A673 (cell line): ENCODE measurements at regions of chr6 and their contacts with region 1.

Region 1: DNA sequence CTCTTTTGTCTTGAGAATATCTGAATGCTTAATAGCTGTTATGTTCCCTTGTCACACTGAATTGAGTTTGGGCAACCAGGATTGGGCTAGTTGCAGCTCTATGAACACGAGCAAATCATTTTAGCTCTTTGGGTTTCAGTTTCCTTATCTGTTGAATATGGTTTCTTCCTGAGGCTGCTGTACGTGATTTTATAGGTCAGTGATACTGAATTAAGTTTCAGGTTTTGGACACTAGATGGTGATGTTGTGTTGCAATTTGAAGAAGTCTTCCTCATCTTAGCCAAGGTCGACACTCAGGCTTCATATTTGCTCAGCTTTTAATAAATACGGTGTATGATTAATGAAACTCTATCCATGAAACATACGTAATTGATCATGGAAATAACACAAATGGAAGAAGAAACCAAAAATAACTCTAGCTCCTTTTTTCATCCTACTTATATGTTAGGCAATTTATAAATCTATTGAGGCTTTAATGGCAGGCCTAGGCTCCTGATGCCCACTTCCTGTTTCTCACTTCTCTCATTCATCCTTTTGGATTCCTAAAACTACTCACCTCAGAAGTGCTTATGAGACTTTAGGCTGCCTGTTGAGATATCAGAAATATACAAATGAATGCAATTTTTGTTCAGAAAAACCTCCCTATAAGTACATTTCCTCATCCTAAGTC is 354.1 kb upstream of the MAP3K7 start:
- DNase-seq: peak; percentile 84
- H3K4me3 ChIP-seq: no peak overlapping the region
- H3K27ac ChIP-seq: no peak overlapping the region
- H3K4me1 ChIP-seq: peaks cover 6% of the 10 kb centered on the region
- H3K27me3 ChIP-seq: no peaks in the 10 kb centered on the region
- CTCF ChIP-seq: peak; percentile 72

Region 2: DNA sequence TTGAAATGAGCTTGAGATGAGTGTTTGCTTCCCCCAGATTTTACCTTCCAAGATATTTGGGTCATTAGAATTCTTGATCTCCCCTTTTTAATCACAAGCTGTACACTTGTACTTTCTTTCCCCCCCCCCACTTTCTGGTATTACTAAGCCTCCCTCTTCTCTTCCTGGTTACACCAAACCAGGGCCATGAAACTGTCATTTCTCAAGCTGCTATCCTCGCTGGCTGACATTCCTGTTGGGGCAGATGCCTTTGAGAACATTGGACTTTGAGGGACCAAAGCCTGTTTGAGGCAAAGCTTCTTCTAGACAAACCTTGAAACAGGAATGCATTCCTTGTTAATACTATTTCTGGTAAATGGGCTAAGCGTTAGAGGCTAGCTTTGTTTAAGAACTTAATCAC is 321.7 kb before region 1 on chr6:
- CTCF ChIA-PET with region 1: no interaction called
- POLR2A ChIA-PET with region 1: no interaction called
- intact Hi-C with region 1: no loop called
- DNase-seq: no peak
- H3K4me3 ChIP-seq: no peak overlapping the region
- H3K27ac ChIP-seq: no peak overlapping the region
- H3K4me1 ChIP-seq: no peaks in the 10 kb centered on the region
- H3K27me3 ChIP-seq: peaks cover 21% of the 10 kb centered on the region
- CTCF ChIP-seq: no peak

Region 3: GRCh38 chr6:91063362-91063761 is 122.4 kb after region 1 on chr6:
- CTCF ChIA-PET with region 1: no interaction called
- POLR2A ChIA-PET with region 1: no interaction called
- intact Hi-C with region 1: loop called (anchors 5 kb)
- DNase-seq: no peak
- H3K4me3 ChIP-seq: no peak overlapping the region
- H3K27ac ChIP-seq: no peak overlapping the region
- H3K4me1 ChIP-seq: peaks cover 8% of the 10 kb centered on the region
- H3K27me3 ChIP-seq: no peaks in the 10 kb centered on the region
- CTCF ChIP-seq: no peak

Region 4: GRCh38 chr6:91094806-91095475 is 154.0 kb after region 1 on chr6:
- CTCF ChIA-PET with region 1: no interaction called
- POLR2A ChIA-PET with region 1: no interaction called
- intact Hi-C with region 1: no loop called
- DNase-seq: no peak
- H3K4me3 ChIP-seq: no peak overlapping the region
- H3K27ac ChIP-seq: no peak overlapping the region
- H3K4me1 ChIP-seq: peaks cover 16% of the 10 kb centered on the region
- H3K27me3 ChIP-seq: no peaks in the 10 kb centered on the region
- CTCF ChIP-seq: no peak

Region 5: DNA sequence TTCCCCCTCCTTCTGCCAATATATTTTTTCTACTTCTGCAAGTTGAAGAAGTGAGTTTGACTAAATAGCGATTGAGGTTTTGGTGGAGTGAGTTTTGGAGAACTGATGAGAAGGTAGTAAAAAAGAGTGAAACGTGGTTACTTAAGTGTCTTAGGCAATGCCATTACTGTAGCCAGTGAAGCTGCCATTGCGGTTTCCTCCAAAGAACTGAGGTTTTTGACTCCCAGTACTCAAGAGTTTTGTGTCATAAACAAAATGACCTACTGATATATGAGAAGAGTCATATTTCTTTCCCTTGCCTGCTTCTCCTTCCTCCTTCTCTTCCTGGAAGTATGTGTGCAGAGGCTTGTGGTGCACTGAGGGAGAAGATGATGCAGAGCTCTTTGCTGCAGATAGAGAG is 200.4 kb after region 1 on chr6:
- CTCF ChIA-PET with region 1: interaction called, 5 read pairs
- POLR2A ChIA-PET with region 1: no interaction called
- intact Hi-C with region 1: loop called (anchors 5 kb)
- DNase-seq: no peak
- H3K4me3 ChIP-seq: no peak overlapping the region
- H3K27ac ChIP-seq: peak overlapping the region; percentile 48
- H3K4me1 ChIP-seq: peaks cover 61% of the 10 kb centered on the region
- H3K27me3 ChIP-seq: no peaks in the 10 kb centered on the region
- CTCF ChIP-seq: no peak

Region 6: GRCh38 chr6:92647625-92648024 is 1706.7 kb after region 1 on chr6:
- CTCF ChIA-PET with region 1: no interaction called
- POLR2A ChIA-PET with region 1: no interaction called
- intact Hi-C with region 1: loop called (anchors 10 kb)
- DNase-seq: no peak
- H3K4me3 ChIP-seq: no peak overlapping the region
- H3K27ac ChIP-seq: no peak overlapping the region
- H3K4me1 ChIP-seq: no peaks in the 10 kb centered on the region
- H3K27me3 ChIP-seq: no peaks in the 10 kb centered on the region
- CTCF ChIP-seq: no peak